Activated CD4-positive, alpha-beta memory T cell treated with anti-CD3 and anti-CD28 coated beads for 36 hours (primary cell): ENCODE measurements at regions of chr1 and their contacts with region 1.

Region 1: DNA sequence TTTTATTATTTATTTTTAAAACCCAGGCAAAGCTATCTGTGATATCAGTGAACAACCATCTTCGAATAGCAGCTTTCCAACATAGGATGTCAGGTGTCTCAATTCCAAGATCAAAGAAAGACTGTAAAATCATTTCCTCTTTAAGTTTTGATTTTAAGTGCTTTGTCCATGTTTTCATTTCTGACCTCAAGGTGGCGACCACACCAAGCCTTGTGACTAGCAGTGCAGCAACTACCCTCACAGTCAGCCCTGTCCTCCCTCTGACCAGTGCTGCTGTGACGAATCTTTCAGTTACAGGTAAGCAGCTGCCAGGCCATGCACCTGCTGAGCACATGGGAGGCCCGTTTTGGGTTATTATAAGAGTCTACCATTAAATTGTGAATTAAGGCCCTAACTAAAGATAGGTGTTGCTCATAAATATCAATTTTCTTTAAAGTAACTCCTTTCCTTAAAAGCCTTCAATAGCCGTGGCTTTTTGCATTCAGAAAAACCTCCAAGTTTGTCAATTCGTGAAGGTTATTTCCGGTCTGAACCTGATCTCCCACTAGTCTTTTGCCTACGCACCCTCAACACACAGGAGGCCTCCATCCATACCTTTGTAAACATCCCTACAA is 117.0 kb downstream of the CD247 start:
- DNase-seq: peak; percentile 64
- H3K4me3 Mint-ChIP-seq: no peak overlapping the region
- H3K27ac Mint-ChIP-seq: no peak overlapping the region
- H3K4me1 Mint-ChIP-seq: no peaks in the 10 kb centered on the region
- H3K27me3 Mint-ChIP-seq: no peaks in the 10 kb centered on the region

Region 2: DNA sequence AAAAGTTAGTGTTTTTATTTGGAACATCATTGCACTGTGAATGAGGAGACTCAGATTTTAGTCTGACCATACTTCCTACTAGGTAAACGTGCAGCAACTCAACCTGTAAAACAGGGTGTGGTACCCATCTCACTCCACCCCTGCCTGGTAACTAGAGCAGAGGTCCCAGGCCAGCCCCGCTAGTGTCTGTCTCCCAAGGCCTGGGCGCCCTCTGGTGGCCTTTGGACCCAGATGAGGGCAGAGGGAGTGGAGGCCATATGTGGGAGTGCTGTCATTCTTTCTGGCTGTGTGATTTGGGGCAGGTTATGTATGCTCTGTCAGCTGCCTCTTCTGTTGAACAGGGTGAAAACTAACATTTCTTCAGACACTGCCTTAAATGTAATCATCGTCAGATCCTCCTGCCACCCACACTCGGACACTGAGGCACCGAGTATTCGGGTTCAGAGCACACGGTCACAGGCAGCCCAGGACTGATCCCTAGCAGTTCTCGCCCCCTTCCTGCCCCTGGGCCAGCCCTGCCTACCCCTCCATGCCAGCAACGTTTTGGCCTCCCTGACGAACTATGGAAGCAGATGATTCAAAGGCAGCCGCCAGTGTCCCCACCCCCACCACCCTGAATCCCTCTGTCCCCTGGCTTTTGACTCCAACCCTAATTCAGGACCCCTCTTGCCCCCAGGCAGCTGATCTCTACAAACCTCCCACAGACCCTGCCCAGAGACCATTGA is 40.9 kb after region 1 on chr1:
- CTCF ChIA-PET with region 1: interaction called, 10 read pairs
- POLR2A ChIA-PET with region 1: no interaction called
- intact Hi-C with region 1: loop called (anchors 1 kb)
- DNase-seq: peak; percentile 91
- H3K4me3 Mint-ChIP-seq: no peak overlapping the region
- H3K27ac Mint-ChIP-seq: peak overlapping the region; percentile 64
- H3K4me1 Mint-ChIP-seq: peaks cover 71% of the 10 kb centered on the region
- H3K27me3 Mint-ChIP-seq: no peaks in the 10 kb centered on the region